ENCODE measurements at regions of chr1 and their contacts with region 1.

Region 1: DNA sequence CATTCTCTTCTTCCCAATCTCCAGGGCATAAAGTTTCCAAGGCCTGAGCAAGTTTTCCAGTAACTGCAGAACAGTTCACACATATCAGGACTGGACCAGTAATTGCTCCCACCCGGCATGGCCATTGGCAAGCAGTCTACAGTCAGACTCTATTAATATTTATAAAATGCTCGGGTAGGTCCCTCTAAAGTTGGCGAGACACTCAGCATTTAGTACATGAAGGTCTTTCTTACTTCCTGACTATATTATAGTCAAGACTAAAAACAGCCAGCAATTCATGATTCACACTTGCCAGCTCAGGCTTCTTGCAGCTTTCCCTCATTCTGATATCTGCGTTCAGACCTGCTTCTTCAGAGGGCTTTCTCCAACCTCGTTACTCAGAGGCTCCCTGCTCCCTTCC is 25.4 kb downstream of the GADD45A start:
- DNase-seq: peak in 1 of 2 donors; percentile 75
- ATAC-seq: peak; percentile 62
- H3K4me3 ChIP-seq: no peak overlapping the region
- H3K27ac ChIP-seq: peak overlapping the region; percentile 72 to 96
- H3K4me1 ChIP-seq: peaks cover 6 to 8% of the 10 kb centered on the region in 2 donors
- H3K27me3 ChIP-seq: no peaks in the 10 kb centered on the region

Region 2: GRCh38 chr1:67685067-67685557 is 25.3 kb before region 1 on chr1 and contains the start of gene GADD45A:
- intact Hi-C with region 1: loop called (anchors 2 kb)
- DNase-seq: peak; percentile 99
- ATAC-seq: peak; percentile 95
- H3K4me3 ChIP-seq: peak within 1 kb of the TSS; percentile 80 to 96
- H3K27ac ChIP-seq: peak within 1 kb of the TSS; percentile 87 to 95
- H3K4me1 ChIP-seq: peaks cover 0 to 5% of the 10 kb centered on the region in 2 donors
- H3K27me3 ChIP-seq: no peaks in the 10 kb centered on the region
- total RNA-seq, gene GADD45A: 49.7 to 158 TPM

Region 3: DNA sequence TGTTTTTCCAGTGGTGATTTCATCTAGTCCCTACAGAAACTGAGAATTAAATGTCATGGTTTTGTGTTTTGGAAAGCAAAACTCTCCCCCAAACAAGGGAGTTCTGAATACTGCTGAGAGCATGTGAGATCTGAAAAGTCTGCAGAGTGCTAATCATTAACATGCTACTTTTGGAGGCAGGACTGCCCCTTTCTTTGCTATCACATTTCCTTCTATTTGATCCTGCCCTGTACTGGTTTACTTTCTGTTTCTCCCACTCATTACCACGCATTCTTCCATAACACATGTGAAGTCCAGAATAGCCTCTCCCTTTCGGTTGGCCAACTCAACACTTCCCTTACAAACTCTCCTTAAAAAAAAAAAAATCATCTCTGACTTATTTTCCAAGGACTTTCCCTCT is 38.2 kb after region 1 on chr1:
- intact Hi-C with region 1: loop called (anchors 2 to 5 kb)
- DNase-seq: no peak
- ATAC-seq: peak; percentile 66
- H3K4me3 ChIP-seq: peak overlapping the region in 1 of 2 donors; percentile 7
- H3K27ac ChIP-seq: peak overlapping the region; percentile 84 to 99
- H3K4me1 ChIP-seq: peaks cover 16 to 19% of the 10 kb centered on the region in 2 donors
- H3K27me3 ChIP-seq: no peaks in the 10 kb centered on the region

Region 4: GRCh38 chr1:67889953-67890567 is 179.6 kb after region 1 on chr1:
- intact Hi-C with region 1: no loop called
- DNase-seq: no peak
- ATAC-seq: peak; percentile 54
- H3K4me3 ChIP-seq: no peak overlapping the region
- H3K27ac ChIP-seq: no peak overlapping the region
- H3K4me1 ChIP-seq: no peaks in the 10 kb centered on the region
- H3K27me3 ChIP-seq: no peaks in the 10 kb centered on the region